MCF 10A (cell line): ENCODE measurements at regions of chr6 and their contacts with region 1.

Region 1: DNA sequence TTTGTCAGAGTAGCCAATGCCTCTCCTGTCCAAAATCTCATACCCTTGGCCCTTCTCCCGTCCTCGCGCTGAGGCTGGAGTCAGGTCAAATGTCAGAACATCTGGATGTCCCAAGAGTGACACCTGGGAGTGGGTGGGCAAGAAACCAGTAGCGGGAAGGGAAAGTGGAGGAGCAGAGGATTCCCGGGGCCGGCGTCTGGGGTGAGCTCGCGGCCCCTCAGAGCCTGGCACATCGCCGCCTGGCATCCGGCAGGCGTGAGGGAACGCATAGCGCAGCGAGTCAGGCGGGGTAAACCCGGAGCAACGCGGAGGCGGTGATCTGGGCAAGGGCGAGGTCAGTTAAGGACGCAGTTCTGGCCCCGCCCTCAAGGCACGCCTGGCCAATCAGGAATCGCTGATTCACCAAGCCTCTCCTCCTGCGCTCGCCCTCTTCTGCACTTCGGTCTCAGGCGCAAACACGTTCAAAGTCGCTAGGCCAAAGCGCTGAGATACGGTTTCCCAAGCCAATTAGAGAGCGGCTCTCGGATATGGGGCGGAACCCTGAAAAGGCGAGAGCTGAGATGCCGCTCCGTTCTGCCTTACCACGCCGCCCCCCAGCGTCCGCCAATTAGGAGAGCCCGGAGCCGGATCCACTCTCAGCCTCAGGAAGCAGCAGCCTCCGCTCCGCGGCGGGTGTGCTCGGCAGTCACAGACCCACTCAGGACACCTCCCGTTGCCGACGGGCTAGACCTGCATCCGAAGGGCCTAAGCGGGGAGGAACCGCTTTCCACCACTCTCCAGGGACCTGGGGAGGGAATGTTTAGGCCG is 22.5 kb downstream of the VPS52 start:
- DNase-seq: peak; percentile 99
- H3K4me3 Mint-ChIP-seq: peak overlapping the region; percentile 82
- H3K27ac Mint-ChIP-seq: peak overlapping the region; percentile 70
- H3K4me1 Mint-ChIP-seq: peaks cover 22% of the 10 kb centered on the region
- H3K27me3 Mint-ChIP-seq: no peaks in the 10 kb centered on the region
- CTCF ChIP-seq: no peak

Region 2: DNA sequence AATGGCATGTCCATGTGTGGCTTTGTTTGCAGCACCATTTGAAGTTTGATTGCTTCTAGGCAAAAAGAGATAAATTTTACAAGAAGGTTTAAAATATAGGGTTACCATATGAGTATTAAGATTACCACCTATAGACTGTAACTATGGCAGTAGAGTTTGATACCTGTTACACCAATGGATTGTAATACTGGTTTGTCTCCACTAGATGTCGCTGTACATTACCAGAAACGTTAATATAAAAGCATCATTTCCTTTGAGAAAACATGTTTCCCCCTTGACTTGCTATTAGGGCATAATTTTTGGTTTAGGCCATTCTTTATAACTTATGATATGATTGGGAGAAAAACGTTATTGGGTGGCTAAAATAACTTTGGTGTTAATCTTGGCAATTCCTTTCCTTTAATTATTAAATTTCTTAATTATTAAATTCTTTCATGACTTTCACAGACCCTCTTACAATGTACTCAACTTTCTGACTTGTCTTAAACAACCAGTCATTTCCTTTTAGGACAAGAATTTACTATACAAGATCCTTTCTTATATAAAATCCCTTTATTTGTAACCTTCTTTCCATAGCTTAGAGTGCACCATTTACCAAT is 130.5 kb before region 1 on chr6:
- CTCF ChIA-PET with region 1: interaction called, 13 read pairs
- POLR2A ChIA-PET with region 1: interaction called, 3 read pairs
- intact Hi-C with region 1: loop called (anchors 2 kb)
- DNase-seq: peak; percentile 62
- H3K4me3 Mint-ChIP-seq: no peak overlapping the region
- H3K27ac Mint-ChIP-seq: no peak overlapping the region
- H3K4me1 Mint-ChIP-seq: no peaks in the 10 kb centered on the region
- H3K27me3 Mint-ChIP-seq: peaks cover 84% of the 10 kb centered on the region
- CTCF ChIP-seq: peak; percentile 53

Region 3: GRCh38 chr6:33200219-33201146 is 48.6 kb before region 1 on chr6 and contains the starts of genes RXRB and SLC39A7:
- CTCF ChIA-PET with region 1: interaction called, 8 read pairs
- POLR2A ChIA-PET with region 1: interaction called, 20 read pairs
- intact Hi-C with region 1: loop called (anchors 2 kb)
- DNase-seq: peak; percentile 99
- H3K4me3 Mint-ChIP-seq: peak within 1 kb of the TSS; percentile 98
- H3K27ac Mint-ChIP-seq: peak within 1 kb of the TSS; percentile 100
- H3K4me1 Mint-ChIP-seq: peaks cover 61% of the 10 kb centered on the region
- H3K27me3 Mint-ChIP-seq: no peaks in the 10 kb centered on the region
- CTCF ChIP-seq: no peak
- total RNA-seq, gene RXRB: 29.6 and 35.1 TPM in 2 replicates
- total RNA-seq, gene SLC39A7: 118 and 187 TPM in 2 replicates

Region 4: DNA sequence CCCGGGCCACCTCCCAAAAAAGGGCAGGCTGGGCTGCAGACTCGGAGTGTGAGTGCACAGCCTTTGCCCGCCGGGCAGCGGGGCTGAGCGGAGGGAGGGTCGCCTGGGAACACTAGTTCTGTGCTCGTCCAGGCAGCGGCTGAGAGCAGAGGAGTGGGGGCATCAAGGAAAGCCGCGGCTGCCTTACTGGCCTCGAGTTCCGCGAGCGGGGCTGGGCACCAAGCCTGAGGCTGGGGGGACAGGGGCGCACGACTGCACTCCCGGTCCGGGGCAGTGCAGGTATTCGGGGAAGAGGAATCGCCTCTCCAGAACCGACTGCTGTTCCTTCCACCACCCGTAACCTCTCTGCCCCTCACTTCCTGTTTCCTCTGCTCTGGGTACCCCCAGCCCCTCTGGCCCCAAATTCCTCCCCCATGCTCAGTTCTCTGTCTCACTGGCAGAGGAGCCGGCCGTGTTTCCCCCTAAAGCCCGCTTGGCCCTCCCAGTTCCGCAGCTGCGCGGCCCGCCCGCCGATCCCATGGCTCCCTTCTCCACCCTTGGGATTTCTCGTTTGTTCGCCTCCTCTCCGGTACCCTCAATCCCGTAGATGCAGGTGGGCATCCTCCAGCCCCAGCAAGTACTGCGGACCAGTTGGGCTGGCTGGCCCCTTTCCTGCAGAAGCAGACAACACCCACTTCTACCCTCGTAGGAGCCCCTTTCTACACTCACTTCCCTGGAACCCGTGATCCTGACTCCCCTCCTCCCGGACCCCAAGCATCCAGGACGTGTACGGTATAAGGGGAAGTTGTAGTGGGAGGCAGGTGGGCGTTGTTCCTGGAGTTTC is 35.8 kb before region 1 on chr6:
- CTCF ChIA-PET with region 1: interaction called, 10 read pairs
- POLR2A ChIA-PET with region 1: interaction called, 73 read pairs
- intact Hi-C with region 1: loop called (anchors 2 kb)
- DNase-seq: no peak
- H3K4me3 Mint-ChIP-seq: peak overlapping the region; percentile 50
- H3K27ac Mint-ChIP-seq: no peak overlapping the region
- H3K4me1 Mint-ChIP-seq: peaks cover 31% of the 10 kb centered on the region
- H3K27me3 Mint-ChIP-seq: peaks cover 48% of the 10 kb centered on the region
- CTCF ChIP-seq: no peak

Region 5: DNA sequence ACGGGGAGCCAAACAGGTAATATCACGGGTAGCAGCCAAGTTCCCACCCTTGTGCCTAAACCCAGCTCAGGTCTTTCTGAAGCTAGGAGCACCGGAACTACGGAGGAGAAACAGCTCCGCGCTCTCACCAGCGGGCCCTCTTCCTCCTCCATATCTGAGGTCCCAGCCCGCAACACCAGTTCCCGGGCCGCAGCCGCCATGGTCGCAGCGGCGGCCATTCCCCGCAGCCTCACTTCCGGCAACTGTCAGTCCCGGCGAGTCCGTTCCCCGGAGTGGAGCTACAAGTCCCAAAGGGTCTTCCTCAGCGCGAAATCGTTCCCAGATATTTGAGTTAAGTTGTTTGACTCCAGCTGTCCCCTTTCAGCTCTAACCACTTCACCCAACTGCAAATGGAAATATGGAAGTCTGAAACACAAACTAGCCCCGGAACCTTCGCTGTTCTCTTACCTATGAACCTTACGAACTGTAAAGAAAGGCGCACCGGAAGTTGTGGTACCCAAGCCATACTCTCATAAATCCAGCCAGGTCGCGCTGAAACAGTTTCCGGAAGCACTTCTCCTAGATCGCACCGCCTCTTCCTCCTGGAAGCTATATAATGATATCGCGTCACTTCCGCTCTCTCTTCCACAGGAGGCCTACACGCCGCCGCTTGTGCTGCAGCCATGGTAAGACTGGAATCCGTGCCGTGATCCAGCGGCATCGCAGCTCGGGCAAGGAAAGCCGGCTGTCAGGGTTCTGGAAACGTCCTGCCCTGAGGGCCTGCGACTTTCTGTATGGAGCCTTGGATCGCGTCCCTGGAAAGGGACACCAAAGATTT is 22.5 kb after region 1 on chr6 and contains the starts of genes RPS18 and VPS52:
- CTCF ChIA-PET with region 1: interaction called, 10 read pairs
- POLR2A ChIA-PET with region 1: interaction called, 155 read pairs
- intact Hi-C with region 1: no loop called
- DNase-seq: peak; percentile 99
- H3K4me3 Mint-ChIP-seq: peak within 1 kb of the TSS; percentile 99
- H3K27ac Mint-ChIP-seq: peak within 1 kb of the TSS; percentile 100
- H3K4me1 Mint-ChIP-seq: peaks cover 34% of the 10 kb centered on the region
- H3K27me3 Mint-ChIP-seq: no peaks in the 10 kb centered on the region
- CTCF ChIP-seq: no peak
- total RNA-seq, gene RPS18: 4,063 and 4,680 TPM in 2 replicates
- total RNA-seq, gene VPS52: 47.8 and 49.7 TPM in 2 replicates

Region 6: DNA sequence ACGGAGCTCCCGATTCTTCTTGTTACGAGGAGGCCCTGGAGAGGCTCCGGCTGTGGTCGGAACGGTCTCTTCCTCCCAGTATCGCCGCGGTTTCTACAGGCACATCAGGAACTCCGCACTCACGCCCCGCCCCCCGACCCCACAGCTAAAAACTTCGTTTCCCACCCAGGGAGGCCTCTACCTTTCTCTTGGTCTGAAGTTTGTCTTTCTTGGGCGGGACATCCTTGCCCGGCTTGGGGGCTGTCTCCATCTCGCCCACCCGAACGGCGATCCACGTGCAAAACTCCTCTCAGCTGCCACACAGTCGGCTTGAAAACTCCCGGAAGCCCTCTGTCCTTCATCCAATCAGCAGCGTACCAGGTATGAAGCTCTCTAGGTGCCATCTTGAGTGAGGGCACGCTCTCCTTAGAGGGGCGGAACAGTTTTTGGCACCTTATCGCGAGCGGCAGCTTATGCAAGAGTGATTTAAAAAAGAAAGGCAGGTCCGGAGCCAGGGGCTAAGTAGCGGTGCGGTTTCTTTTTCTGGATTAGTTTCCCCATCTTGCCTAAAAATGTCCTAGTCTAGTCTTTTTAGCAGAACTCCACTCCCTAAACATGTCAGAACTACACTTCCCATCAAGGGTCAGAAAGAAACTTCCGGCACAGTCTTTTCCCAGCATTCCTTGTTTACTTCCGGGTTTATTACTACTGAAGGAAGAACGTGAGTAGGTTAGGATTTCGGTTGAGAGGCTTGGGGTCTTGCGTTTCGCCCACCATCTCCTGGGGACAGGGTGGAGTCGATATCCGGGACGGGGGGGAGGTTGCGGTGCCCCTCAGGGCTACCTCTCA is 40.0 kb after region 1 on chr6 and contains the starts of genes PFDN6 and WDR46:
- CTCF ChIA-PET with region 1: interaction called, 5 read pairs
- POLR2A ChIA-PET with region 1: interaction called, 21 read pairs
- intact Hi-C with region 1: no loop called
- DNase-seq: peak; percentile 93
- H3K4me3 Mint-ChIP-seq: peak within 1 kb of the TSS; percentile 88
- H3K27ac Mint-ChIP-seq: peak within 1 kb of the TSS; percentile 89
- H3K4me1 Mint-ChIP-seq: peaks cover 24% of the 10 kb centered on the region
- H3K27me3 Mint-ChIP-seq: no peaks in the 10 kb centered on the region
- CTCF ChIP-seq: no peak
- total RNA-seq, gene PFDN6: 54.7 and 67.1 TPM in 2 replicates
- total RNA-seq, gene WDR46: 53.1 and 57.0 TPM in 2 replicates